ENCODE measurements at regions of chr14 and their contacts with region 1.

Region 1: GRCh38 chr14:23114669-23115491 is 4.2 kb downstream of the CEBPE start:
- DNase-seq: no peak
- H3K4me3 ChIP-seq: no peak overlapping the region
- H3K27ac ChIP-seq: no peak overlapping the region
- H3K4me1 ChIP-seq: peaks cover 2 to 43% (median 30%) of the 10 kb centered on the region in 4 experiments
- H3K27me3 ChIP-seq: peaks cover 0 to 4% (median 0%) of the 10 kb centered on the region in 5 experiments

Region 2: DNA sequence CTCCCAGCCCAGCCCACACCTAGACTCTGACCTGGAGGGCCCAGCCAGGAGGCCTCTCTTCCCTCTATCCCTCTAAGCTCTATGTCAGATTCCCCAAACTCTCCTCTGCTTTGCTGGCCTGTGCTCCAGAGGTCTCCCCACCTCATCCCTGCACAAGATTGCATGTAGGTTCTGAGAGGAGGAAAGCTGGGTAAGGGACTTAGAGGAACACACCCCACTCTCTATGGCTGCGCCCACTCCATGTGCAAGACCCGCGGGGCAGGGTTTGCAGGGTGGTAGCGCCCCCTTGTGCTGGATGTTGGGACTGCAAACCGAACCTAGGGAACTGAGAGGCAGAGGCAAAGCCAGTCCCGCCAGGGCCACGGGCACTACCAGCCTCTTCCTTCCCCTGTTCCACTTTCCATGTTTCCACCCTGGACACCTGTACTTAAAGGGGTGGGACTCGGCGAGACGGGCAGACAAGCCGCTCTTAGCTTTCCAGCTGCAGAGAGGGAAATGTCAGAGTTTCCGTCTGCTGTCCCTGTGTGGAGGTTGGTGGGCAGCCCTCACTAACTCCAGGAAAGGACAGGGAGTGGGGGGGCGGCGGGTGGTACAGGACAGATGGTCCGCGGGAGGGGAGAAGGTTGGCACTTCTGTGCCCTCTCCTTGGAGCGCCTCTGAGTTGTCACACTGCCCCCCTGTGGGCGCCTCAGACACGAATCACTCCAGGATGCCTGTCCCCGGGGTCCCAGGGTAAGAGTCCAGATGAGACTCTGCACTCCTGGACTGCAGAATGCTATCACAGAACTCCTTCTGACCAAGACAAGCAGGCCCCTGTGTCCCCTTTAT is 261.7 kb before region 1 on chr14:
- CTCF ChIA-PET with region 1: no interaction called
- POLR2A ChIA-PET with region 1: no interaction called
- DNase-seq: peak; percentile 84 to 88 (median 87)
- H3K4me3 ChIP-seq: peak overlapping the region in 6 of 7 experiments; percentile 23 to 74 (median 60)
- H3K27ac ChIP-seq: no peak overlapping the region
- H3K4me1 ChIP-seq: peaks cover 0 to 34% (median 29%) of the 10 kb centered on the region in 4 experiments
- H3K27me3 ChIP-seq: peaks cover 2 to 42% (median 5%) of the 10 kb centered on the region in 5 experiments

Region 3: GRCh38 chr14:23085458-23085857 is 29.4 kb before region 1 on chr14:
- CTCF ChIA-PET with region 1: interaction called, 200 read pairs
- POLR2A ChIA-PET with region 1: no interaction called
- DNase-seq: no peak
- H3K4me3 ChIP-seq: no peak overlapping the region
- H3K27ac ChIP-seq: no peak overlapping the region
- H3K4me1 ChIP-seq: no peaks in the 10 kb centered on the region
- H3K27me3 ChIP-seq: no peaks in the 10 kb centered on the region

Region 4: DNA sequence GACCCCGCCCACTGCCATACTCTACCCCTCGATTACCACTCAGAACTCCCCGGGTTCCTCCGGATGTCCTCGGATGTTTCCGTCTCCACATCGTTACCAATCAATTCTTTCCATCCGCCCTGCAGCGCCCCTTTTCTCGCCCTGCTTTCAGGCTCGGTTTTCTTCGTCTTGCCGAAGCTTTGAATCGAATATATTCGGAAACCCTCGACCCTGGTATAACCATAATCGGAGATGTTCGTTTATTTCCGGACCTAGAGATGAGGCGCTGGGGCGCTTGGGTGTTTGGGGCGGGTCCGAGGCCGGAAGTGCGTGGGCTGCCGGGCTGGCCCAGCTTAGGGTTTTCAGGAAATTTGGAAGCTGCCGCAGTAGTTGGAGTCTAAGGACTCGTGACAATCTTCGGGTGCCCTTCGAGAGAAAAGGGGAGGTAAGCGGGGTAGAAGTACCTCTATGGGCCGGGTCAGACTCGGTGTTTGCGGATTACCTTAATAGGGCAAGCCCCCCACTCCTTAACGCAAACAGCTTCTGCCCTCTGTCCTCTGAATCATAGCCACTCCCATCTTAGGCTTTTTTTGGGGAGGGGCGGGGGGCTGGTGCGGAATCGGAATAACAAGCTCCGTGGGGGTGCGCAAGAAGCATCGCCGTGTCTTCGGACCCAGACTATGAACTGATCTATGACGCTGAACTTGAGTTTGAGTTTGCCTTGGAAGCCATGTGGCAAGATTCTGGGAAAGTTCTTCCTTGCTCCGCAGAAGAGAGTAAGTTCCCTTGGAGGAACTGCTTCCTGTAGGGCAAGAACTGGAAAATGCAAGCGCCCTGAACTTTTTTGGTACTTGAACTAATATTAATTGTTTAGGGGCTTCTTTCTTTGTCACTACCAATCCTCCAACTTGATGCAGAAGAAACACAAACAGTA is 19.4 kb before region 1 on chr14 and contains the start of gene C14orf119:
- CTCF ChIA-PET with region 1: interaction called, 32 read pairs
- POLR2A ChIA-PET with region 1: interaction called, 9 read pairs
- DNase-seq: peak; percentile 100
- H3K4me3 ChIP-seq: peak within 1 kb of the TSS; percentile 85 to 100 (median 96)
- H3K27ac ChIP-seq: peak within 1 kb of the TSS; percentile 98 to 99
- H3K4me1 ChIP-seq: peaks cover 15 to 33% (median 20%) of the 10 kb centered on the region in 4 experiments
- H3K27me3 ChIP-seq: no peaks in the 10 kb centered on the region

Region 5: GRCh38 chr14:23141671-23142451 is 27.0 kb after region 1 on chr14:
- CTCF ChIA-PET with region 1: no interaction called
- POLR2A ChIA-PET with region 1: no interaction called
- DNase-seq: no peak
- H3K4me3 ChIP-seq: no peak overlapping the region
- H3K27ac ChIP-seq: no peak overlapping the region
- H3K4me1 ChIP-seq: no peaks in the 10 kb centered on the region
- H3K27me3 ChIP-seq: no peaks in the 10 kb centered on the region

Region 6: GRCh38 chr14:23259426-23259825 is 144.5 kb after region 1 on chr14:
- CTCF ChIA-PET with region 1: no interaction called
- POLR2A ChIA-PET with region 1: no interaction called
- DNase-seq: no peak
- H3K4me3 ChIP-seq: no peak overlapping the region
- H3K27ac ChIP-seq: no peak overlapping the region
- H3K4me1 ChIP-seq: no peaks in the 10 kb centered on the region
- H3K27me3 ChIP-seq: peaks cover 0 to 3% (median 0%) of the 10 kb centered on the region in 5 experiments

Region 7: GRCh38 chr14:23469127-23469905 is 354.4 kb after region 1 on chr14 and contains the start of gene NGDN:
- CTCF ChIA-PET with region 1: no interaction called
- POLR2A ChIA-PET with region 1: no interaction called
- DNase-seq: peak; percentile 100
- H3K4me3 ChIP-seq: peak within 1 kb of the TSS; percentile 87 to 99 (median 96)
- H3K27ac ChIP-seq: peak within 1 kb of the TSS; percentile 85 to 98
- H3K4me1 ChIP-seq: peaks cover 6 to 11% (median 8%) of the 10 kb centered on the region in 4 experiments
- H3K27me3 ChIP-seq: no peaks in the 10 kb centered on the region

Measured in common myeloid progenitor, CD34-positive (primary cell).